Activated naive CD4-positive, alpha-beta T cell treated with anti-CD3 and anti-CD28 coated beads for 36 hours (primary cell): ENCODE measurements at regions of chr17 and their contacts with region 1.

Region 1: GRCh38 chr17:55996825-55997224 is 156.4 kb upstream of the ANKFN1 start:
- DNase-seq: no peak
- H3K4me3 Mint-ChIP-seq: no peak overlapping the region
- H3K27ac Mint-ChIP-seq: no peak overlapping the region
- H3K4me1 Mint-ChIP-seq: peaks cover 2% of the 10 kb centered on the region
- H3K27me3 Mint-ChIP-seq: peaks cover 17% of the 10 kb centered on the region

Region 2: DNA sequence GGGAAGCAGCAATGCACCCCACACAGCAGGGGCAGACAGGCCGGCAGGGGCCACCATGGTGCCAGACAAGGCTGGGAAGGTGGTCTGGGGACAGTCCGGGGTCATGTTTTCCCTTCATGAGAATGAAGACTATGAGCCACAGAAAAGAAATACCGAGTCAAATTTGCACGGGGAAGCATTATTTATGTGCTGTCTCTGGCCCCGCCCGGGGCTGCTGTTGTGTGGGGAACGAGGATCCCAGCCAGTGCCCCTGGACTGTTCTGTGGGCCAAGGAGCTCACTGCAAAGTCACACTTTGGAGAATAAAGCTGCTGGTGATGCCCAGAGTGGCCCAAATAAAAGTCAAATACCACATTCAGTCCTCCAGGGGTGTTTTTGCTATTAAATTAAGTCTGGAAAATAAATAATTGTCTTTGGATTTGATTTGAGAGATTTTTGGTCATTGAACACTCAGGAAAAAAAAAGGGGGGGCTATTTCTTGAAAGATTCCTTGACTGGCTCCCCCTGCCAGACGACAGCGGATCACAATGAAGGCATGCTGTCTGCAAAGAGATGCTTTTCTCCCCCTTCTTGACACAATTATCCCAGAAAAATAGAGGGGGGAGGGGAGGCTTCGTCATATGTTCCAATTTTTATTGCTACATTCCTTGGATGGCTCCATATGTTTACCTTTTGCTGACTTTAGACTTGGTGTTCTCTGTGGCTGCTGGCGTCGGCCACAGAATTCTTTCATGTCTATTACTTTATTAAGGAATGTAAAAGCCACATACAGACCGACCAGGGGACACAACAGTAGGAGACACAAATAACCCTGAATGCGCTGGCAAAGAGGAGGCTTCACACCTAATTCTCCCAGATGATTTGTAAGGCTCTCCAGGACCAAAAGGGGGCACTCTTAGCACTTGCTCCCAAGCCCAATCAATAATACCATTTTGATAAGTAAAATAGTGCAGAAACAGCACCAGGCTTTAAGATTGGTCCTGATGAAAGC is 129.3 kb after region 1 on chr17:
- CTCF ChIA-PET with region 1: no interaction called
- intact Hi-C with region 1: loop called (anchors 5 kb)
- DNase-seq: peak; percentile 30
- H3K4me3 Mint-ChIP-seq: no peak overlapping the region
- H3K27ac Mint-ChIP-seq: no peak overlapping the region
- H3K4me1 Mint-ChIP-seq: no peaks in the 10 kb centered on the region
- H3K27me3 Mint-ChIP-seq: peaks cover 3% of the 10 kb centered on the region